ENCODE measurements at regions of chr2 and their contacts with region 1.

Region 1: GRCh38 chr2:217785544-217786045 is 217.2 kb downstream of the TNS1 start:
- DNase-seq: peak; percentile 85
- H3K4me3 Mint-ChIP-seq: no peak overlapping the region
- H3K27ac Mint-ChIP-seq: no peak overlapping the region
- H3K4me1 Mint-ChIP-seq: no peaks in the 10 kb centered on the region
- H3K27me3 Mint-ChIP-seq: peaks cover 40% of the 10 kb centered on the region
- CTCF ChIP-seq: peak; percentile 93

Region 2: GRCh38 chr2:217250013-217250524 is 535.5 kb before region 1 on chr2:
- CTCF ChIA-PET with region 1: interaction called, 10 read pairs
- intact Hi-C with region 1: no loop called
- DNase-seq: no peak
- H3K4me3 Mint-ChIP-seq: no peak overlapping the region
- H3K27ac Mint-ChIP-seq: no peak overlapping the region
- H3K4me1 Mint-ChIP-seq: no peaks in the 10 kb centered on the region
- H3K27me3 Mint-ChIP-seq: no peaks in the 10 kb centered on the region
- CTCF ChIP-seq: no peak

Region 3: DNA sequence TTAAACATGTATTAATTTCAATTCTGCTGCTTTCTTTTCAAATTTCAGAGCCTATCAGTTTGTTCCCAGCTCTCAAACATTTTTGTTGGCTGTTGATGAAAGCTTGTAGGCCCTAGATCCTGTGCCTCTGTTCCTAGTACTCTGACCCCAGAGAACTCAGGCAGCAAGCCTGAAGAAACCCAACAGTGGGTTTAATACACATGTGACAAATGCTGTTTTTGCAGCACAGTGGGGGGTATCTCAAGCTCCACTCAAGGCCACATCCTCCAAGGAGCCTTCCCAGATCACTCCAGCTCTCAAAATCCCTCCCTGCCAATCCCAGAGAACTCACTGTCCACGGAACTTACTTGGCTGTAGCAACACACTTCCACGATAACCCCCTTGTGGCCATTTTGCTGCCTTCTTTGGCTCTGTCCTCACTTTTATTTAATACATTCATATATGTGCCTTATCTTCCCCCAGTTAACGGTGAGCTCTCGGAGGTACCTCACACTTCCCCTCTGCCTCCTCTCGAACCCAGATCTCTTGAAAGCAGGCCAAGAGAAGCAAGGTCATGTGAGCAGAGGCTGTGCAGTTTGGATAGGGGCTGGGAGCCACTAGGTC is 94.8 kb after region 1 on chr2:
- CTCF ChIA-PET with region 1: interaction called, 31 read pairs
- intact Hi-C with region 1: no loop called
- DNase-seq: no peak
- H3K4me3 Mint-ChIP-seq: no peak overlapping the region
- H3K27ac Mint-ChIP-seq: no peak overlapping the region
- H3K4me1 Mint-ChIP-seq: no peaks in the 10 kb centered on the region
- H3K27me3 Mint-ChIP-seq: peaks cover 74% of the 10 kb centered on the region
- CTCF ChIP-seq: no peak

Region 4: DNA sequence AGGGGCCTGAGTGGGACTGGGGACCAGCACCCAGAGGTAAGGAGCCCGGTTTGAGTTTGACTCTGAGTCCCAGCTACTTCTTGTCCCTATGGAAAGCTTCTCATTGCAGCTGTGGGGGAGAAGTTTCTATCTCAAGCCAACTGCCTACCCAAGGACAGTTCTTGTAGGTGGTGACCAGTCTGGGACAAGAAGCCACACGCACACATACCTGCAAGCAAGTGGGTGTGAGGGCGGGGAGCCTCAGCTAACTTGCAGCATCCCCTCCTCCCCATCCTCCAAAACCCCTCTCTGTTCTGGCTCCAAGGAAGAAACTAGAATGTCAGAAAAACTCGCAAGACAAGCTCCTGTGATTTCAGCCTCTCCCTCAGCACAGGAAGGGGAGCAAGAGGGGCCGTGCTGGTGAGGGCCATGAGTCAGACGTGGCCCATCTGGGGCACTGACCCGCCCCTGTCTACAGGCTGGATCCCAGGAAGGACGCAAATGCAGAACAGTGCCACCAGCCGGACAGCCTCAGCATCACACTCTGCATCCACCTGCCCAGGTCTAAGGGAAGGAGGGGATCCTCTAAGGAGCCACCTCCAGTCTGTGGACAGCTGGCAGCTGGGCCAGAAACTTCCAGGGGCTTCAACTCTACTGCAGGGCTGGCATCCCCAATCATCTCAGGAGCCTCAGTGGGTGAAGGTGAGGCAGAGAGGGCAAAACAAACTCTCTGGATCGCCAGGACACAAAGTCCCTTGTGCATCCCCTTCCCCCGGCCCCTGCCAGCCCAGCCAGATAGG is 113.8 kb after region 1 on chr2:
- CTCF ChIA-PET with region 1: interaction called, 10 read pairs
- intact Hi-C with region 1: no loop called
- DNase-seq: peak; percentile 77
- H3K4me3 Mint-ChIP-seq: no peak overlapping the region
- H3K27ac Mint-ChIP-seq: no peak overlapping the region
- H3K4me1 Mint-ChIP-seq: no peaks in the 10 kb centered on the region
- H3K27me3 Mint-ChIP-seq: peaks cover 68% of the 10 kb centered on the region
- CTCF ChIP-seq: peak; percentile 82

Region 5: DNA sequence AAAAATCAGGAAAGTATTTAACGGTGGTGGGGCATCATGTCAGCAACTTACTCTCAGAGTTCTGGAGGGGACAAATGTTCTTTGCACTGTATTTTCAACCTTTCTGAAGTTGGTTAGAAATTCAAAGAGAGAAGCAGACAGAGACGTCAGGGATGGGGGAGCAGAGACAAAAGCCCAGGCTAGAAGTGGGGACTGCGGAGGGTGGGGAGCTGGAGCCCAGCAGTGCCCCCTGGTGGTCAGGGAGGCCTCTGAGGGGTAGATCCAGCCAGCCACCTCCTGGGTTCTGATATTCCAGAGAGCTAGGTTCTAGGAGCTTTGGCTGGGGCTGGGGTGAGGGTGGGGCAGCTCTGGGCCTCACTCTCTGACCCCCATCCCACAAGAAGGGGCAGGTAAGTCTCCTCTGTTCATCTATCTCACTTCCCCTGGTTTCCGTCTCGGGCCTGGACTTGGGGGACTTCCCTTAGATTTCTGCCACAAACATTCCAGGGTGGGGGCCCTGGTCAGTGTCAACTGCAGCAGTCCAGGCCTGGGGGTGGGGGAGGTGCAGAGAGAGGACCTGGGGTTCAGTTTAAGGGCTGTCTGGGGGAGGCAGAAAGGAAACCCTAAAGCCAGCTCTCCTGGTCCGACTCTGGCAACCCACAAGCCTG is 208.3 kb after region 1 on chr2:
- CTCF ChIA-PET with region 1: interaction called, 32 read pairs
- intact Hi-C with region 1: no loop called
- DNase-seq: peak; percentile 83
- H3K4me3 Mint-ChIP-seq: peak overlapping the region; percentile 33
- H3K27ac Mint-ChIP-seq: no peak overlapping the region
- H3K4me1 Mint-ChIP-seq: peaks cover 34% of the 10 kb centered on the region
- H3K27me3 Mint-ChIP-seq: peaks cover 50% of the 10 kb centered on the region
- CTCF ChIP-seq: peak; percentile 72

Region 6: DNA sequence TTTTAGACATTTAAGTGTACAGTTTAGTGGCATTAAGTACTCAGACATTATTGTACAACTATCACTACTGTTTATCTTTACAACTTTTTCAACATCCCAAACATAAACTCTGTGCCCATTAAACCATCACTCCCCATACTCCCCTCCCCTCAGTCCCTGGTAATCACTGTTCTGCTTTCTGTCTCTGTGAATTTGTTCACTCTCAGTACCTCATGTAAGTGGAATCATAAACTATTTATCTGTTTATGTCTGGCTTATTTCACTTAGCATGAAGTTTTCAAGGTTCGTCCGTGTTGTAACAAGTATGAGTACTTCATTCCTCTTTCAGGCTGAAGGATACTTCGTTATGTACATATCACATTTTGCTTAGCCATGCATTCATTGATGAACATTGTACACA is 273.7 kb after region 1 on chr2:
- CTCF ChIA-PET with region 1: no interaction called
- intact Hi-C with region 1: no loop called
- DNase-seq: no peak
- H3K4me3 Mint-ChIP-seq: no peak overlapping the region
- H3K27ac Mint-ChIP-seq: no peak overlapping the region
- H3K4me1 Mint-ChIP-seq: no peaks in the 10 kb centered on the region
- H3K27me3 Mint-ChIP-seq: peaks cover 93% of the 10 kb centered on the region
- CTCF ChIP-seq: no peak

Region 7: DNA sequence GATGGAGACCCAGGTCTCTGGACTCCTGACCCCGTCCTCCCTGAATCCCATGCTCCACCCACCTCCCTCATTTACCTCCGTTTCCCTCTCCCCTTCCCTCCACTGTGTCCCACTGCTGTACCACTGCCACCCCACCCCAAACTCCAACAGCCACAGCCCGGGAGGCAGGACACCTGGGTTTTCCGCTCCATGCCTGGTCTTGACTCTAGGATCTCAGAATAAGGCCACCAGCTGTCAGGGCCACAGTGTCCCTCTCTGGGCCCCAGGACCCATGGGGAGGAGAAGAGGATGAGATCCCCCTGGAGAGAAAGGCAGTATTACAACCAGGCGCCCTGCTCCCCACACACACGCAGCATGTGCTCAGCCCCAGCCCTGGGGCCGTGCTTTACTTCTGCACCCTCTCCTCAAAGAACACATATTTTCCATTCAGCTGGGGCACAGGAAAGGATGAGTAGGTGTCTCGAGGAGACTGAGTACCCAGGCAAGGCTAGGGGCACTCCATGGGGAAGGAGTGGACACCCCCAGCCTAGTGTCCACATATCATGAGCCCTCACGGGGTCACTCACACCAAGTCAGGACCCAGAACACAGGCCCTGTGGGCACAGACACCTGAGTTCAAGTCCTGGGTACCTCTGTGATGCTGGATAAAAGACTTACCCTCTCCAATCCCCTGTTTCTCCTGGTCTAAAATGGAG is 284.2 kb after region 1 on chr2:
- CTCF ChIA-PET with region 1: interaction called, 15 read pairs
- intact Hi-C with region 1: loop called (anchors 2 kb)
- DNase-seq: no peak
- H3K4me3 Mint-ChIP-seq: peak overlapping the region; percentile 70
- H3K27ac Mint-ChIP-seq: no peak overlapping the region
- H3K4me1 Mint-ChIP-seq: peaks cover 8% of the 10 kb centered on the region
- H3K27me3 Mint-ChIP-seq: peaks cover 90% of the 10 kb centered on the region
- CTCF ChIP-seq: no peak

Measured in Calu3 (cell line).